ENCODE measurements at regions of chr16 and their contacts with region 1.

Region 1: DNA sequence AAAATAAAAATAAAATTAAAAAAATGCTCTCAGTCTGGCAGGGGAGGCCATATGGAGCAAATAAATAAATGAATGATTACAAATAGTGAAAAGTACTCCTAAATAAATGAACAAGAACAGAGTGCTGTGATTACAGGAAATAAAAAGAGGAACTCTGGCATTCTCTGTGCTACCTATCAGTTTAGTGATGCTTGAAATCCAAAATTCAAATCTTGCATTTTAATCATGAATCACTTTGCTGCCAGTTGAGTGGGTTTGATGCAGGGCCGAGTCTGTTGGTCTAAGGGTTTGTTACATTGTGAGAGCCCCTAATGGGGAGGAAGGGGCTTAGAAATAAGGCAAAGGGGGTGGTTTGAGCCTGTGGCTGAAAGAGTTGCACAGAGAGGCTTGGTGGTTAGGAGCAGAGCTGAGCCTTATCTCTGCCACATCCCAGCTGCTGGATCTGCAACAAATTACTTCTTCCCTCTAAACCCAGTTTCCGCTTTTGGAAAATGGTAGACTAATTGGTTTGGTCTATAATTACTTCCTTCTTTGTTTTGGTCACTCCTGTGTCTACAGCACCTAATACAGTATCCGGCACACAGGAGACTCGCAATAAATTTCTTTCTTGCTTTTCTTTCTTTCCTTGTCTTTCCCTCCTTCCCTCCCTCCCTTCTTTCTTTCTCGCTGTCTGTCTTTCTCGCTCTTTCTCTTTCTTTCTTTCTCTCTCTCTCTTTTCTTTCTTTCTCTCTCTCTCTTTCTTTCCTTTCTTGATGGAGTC is 6.3 kb upstream of the ABCC1 start:
- DNase-seq: no peak
- ATAC-seq: no peak
- H3K4me3 Mint-ChIP-seq: no peak overlapping the region
- H3K27ac Mint-ChIP-seq: peak overlapping the region; percentile 38
- H3K4me1 Mint-ChIP-seq: peaks cover 28% of the 10 kb centered on the region
- H3K27me3 Mint-ChIP-seq: no peaks in the 10 kb centered on the region

Region 2: GRCh38 chr16:15865742-15866141 is 77.4 kb before region 1 on chr16:
- POLR2A ChIA-PET with region 1: no interaction called
- DNase-seq: no peak
- ATAC-seq: no peak
- H3K4me3 Mint-ChIP-seq: no peak overlapping the region
- H3K27ac Mint-ChIP-seq: no peak overlapping the region
- H3K4me1 Mint-ChIP-seq: peaks cover 2% of the 10 kb centered on the region
- H3K27me3 Mint-ChIP-seq: no peaks in the 10 kb centered on the region

Region 3: GRCh38 chr16:15928261-15929104 is 14.6 kb before region 1 on chr16:
- POLR2A ChIA-PET with region 1: no interaction called
- DNase-seq: no peak
- ATAC-seq: no peak
- H3K4me3 Mint-ChIP-seq: no peak overlapping the region
- H3K27ac Mint-ChIP-seq: no peak overlapping the region
- H3K4me1 Mint-ChIP-seq: no peaks in the 10 kb centered on the region
- H3K27me3 Mint-ChIP-seq: no peaks in the 10 kb centered on the region

Region 4: DNA sequence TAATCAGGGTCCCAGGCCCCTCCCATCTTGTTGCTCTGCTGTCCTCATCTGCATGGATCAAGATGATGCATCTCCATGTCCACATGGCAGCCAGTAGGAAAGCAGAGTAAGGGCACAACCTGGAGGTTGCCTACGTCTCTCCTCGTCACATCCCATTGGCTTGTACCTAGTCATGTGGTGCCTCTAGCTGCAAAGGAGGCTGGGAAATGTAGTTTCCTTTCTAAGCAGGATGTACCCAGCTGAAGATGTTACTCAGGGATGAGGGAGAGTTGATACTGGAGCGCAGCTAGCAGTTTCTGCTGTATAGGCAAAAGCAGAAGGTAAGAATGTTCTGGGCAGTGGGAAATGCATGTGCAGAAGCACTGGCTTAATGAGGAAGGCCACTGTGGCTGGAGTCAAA is 27.1 kb after region 1 on chr16:
- POLR2A ChIA-PET with region 1: no interaction called
- DNase-seq: no peak
- ATAC-seq: peak; percentile 33
- H3K4me3 Mint-ChIP-seq: no peak overlapping the region
- H3K27ac Mint-ChIP-seq: no peak overlapping the region
- H3K4me1 Mint-ChIP-seq: peaks cover 2% of the 10 kb centered on the region
- H3K27me3 Mint-ChIP-seq: no peaks in the 10 kb centered on the region

Region 5: GRCh38 chr16:16014329-16015144 is 71.4 kb after region 1 on chr16:
- POLR2A ChIA-PET with region 1: no interaction called
- DNase-seq: no peak
- ATAC-seq: no peak
- H3K4me3 Mint-ChIP-seq: no peak overlapping the region
- H3K27ac Mint-ChIP-seq: no peak overlapping the region
- H3K4me1 Mint-ChIP-seq: peaks cover 4% of the 10 kb centered on the region
- H3K27me3 Mint-ChIP-seq: no peaks in the 10 kb centered on the region

Region 6: GRCh38 chr16:16062023-16062932 is 119.2 kb after region 1 on chr16:
- POLR2A ChIA-PET with region 1: interaction called, 10 read pairs
- DNase-seq: peak; percentile 34
- ATAC-seq: peak; percentile 69
- H3K4me3 Mint-ChIP-seq: peak overlapping the region; percentile 20
- H3K27ac Mint-ChIP-seq: peak overlapping the region; percentile 35
- H3K4me1 Mint-ChIP-seq: peaks cover 28% of the 10 kb centered on the region
- H3K27me3 Mint-ChIP-seq: no peaks in the 10 kb centered on the region

Measured in activated naive CD8-positive, alpha-beta T cell treated with anti-CD3 and anti-CD28 coated beads, Interleukin-2, amount 10 ng/mL, durations not matched to agents 7 days and 5 days (primary cell).